ENCODE measurements at regions of chr4 and their contacts with region 1.

Region 1: GRCh38 chr4:184889666-184890335 is 64.0 kb upstream of the ACSL1 start:
- DNase-seq: no peak
- H3K4me3 ChIP-seq: no peak overlapping the region
- H3K27ac ChIP-seq: no peak overlapping the region
- H3K4me1 ChIP-seq: no peaks in the 10 kb centered on the region
- H3K27me3 ChIP-seq: no peaks in the 10 kb centered on the region
- CTCF ChIP-seq: no peak

Region 2: DNA sequence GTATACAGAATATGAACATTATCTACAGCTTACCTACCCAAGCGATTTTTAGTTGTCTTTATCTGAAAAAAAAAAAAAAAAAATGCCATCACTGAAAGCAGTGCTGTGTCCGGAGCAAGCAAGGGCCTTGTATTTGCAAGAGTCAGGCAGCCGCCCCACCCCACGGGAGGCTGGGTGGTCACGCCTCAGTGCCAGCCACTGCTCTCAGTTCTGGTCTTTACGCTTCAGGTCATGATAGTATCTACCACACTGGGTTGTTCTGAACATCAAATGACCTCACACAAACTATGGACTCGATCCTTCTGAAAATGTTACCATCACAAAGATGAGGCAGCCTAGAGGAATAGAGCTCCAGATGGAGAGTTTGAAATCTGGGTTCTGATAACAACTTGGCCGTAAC is 65.8 kb after region 1 on chr4:
- CTCF ChIA-PET with region 1: no interaction called
- dilution Hi-C with region 1: loop called (anchors 5 kb)
- in situ Hi-C with region 1: no loop called
- intact Hi-C with region 1: no loop called
- DNase-seq: no peak
- H3K4me3 ChIP-seq: no peak overlapping the region
- H3K27ac ChIP-seq: no peak overlapping the region
- H3K4me1 ChIP-seq: peaks cover 9% of the 10 kb centered on the region
- H3K27me3 ChIP-seq: no peaks in the 10 kb centered on the region
- CTCF ChIP-seq: no peak

Measured in mammary epithelial cell (primary cell).